MCF 10A (cell line): ENCODE measurements at regions of chr5 and their contacts with region 1.

Region 1: DNA sequence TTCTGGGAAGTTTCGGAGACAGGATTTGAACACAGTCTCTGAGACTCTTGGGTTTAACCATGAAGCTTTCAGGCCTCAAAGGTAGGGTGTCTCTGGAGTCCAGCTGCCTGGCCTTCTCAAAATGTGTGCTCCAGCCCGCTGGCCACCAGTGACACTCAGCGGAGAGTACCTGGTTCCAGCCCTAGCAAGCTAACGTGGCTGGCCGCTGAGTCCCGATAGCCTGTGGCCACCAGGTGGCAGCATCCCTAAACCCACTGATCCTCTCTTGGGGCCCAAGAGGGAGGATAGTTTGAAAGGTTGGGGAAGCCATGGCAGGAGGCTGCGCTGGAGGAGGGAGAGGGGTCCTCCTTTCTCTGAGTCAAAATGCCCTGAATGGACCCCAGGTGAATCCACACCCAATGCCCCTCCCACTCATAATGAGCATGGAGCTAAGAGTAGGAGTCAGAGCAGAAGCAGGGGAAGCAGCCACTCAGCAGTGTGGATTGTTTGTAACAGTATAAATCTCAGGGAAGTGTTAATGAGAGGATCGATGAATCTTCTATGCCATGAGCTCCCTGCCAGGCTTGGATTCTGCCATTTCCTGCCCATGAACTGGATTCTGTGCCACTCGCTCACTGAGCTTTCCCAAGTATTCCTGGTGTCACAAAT is 5.4 kb upstream of the TIFAB start:
- DNase-seq: peak; percentile 88
- H3K4me3 Mint-ChIP-seq: no peak overlapping the region
- H3K27ac Mint-ChIP-seq: no peak overlapping the region
- H3K4me1 Mint-ChIP-seq: peaks cover 21% of the 10 kb centered on the region
- H3K27me3 Mint-ChIP-seq: peaks cover 18% of the 10 kb centered on the region
- CTCF ChIP-seq: peak; percentile 90

Region 2: DNA sequence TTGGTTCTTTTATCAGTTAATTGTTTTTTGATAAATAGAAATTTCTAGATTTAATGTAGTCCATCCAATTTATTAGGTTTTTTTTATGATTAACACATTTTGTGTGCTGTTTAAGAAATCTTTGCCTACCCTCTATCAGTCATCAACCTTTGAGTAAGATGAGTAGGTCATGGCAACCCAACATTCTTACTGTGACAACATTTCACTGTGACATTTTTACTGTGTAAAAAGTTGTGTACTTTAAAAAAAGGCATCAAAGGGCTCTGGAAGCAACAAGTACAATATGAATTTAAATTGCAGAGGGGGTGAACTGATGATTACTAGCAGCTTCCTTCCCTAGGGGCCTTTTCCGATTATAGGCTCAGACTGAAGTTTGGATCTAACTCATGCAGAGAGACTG is 47.2 kb before region 1 on chr5:
- CTCF ChIA-PET with region 1: no interaction called
- POLR2A ChIA-PET with region 1: no interaction called
- intact Hi-C with region 1: no loop called
- DNase-seq: no peak
- H3K4me3 Mint-ChIP-seq: no peak overlapping the region
- H3K27ac Mint-ChIP-seq: no peak overlapping the region
- H3K4me1 Mint-ChIP-seq: no peaks in the 10 kb centered on the region
- H3K27me3 Mint-ChIP-seq: peaks cover 55% of the 10 kb centered on the region
- CTCF ChIP-seq: no peak

Region 3: GRCh38 chr5:135443161-135443960 is 14.2 kb before region 1 on chr5:
- CTCF ChIA-PET with region 1: interaction called, 64 read pairs
- POLR2A ChIA-PET with region 1: interaction called, 4 read pairs
- intact Hi-C with region 1: no loop called
- DNase-seq: no peak
- H3K4me3 Mint-ChIP-seq: no peak overlapping the region
- H3K27ac Mint-ChIP-seq: no peak overlapping the region
- H3K4me1 Mint-ChIP-seq: peaks cover 8% of the 10 kb centered on the region
- H3K27me3 Mint-ChIP-seq: no peaks in the 10 kb centered on the region
- CTCF ChIP-seq: no peak

Region 4: GRCh38 chr5:135488727-135489465 is 31.3 kb after region 1 on chr5:
- CTCF ChIA-PET with region 1: interaction called, 96 read pairs
- POLR2A ChIA-PET with region 1: interaction called, 4 read pairs
- intact Hi-C with region 1: no loop called
- DNase-seq: peak; percentile 89
- H3K4me3 Mint-ChIP-seq: peak overlapping the region; percentile 62
- H3K27ac Mint-ChIP-seq: peak overlapping the region; percentile 52
- H3K4me1 Mint-ChIP-seq: peaks cover 34% of the 10 kb centered on the region
- H3K27me3 Mint-ChIP-seq: no peaks in the 10 kb centered on the region
- CTCF ChIP-seq: no peak

Region 5: DNA sequence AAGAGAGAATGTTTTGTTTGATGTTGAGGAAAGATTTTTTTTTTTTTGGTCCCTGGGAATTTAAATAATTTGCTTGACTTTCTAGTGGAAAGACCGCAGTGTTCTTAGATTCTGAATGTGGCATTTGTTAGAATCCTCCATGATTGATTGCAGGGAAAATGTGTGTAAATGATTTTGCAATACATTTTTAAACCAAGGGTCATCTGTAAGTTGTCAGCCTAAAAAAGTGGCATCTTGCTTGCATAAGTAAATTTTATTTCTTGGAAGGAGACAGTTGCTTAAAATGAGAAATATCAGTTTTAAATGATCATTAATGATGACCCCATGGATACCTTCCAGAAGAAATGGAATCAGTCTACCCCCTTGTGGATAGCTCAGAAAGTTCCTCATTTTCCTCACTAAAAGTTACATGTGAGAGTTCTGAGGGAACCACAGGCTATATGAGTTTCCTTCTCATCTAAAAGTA is 271.8 kb after region 1 on chr5:
- CTCF ChIA-PET with region 1: interaction called, 13 read pairs
- POLR2A ChIA-PET with region 1: no interaction called
- intact Hi-C with region 1: no loop called
- DNase-seq: peak; percentile 48
- H3K4me3 Mint-ChIP-seq: no peak overlapping the region
- H3K27ac Mint-ChIP-seq: no peak overlapping the region
- H3K4me1 Mint-ChIP-seq: no peaks in the 10 kb centered on the region
- H3K27me3 Mint-ChIP-seq: no peaks in the 10 kb centered on the region
- CTCF ChIP-seq: peak; percentile 53